PC-9 (cell line): ENCODE measurements at regions of chr15 and their contacts with region 1.

Region 1: DNA sequence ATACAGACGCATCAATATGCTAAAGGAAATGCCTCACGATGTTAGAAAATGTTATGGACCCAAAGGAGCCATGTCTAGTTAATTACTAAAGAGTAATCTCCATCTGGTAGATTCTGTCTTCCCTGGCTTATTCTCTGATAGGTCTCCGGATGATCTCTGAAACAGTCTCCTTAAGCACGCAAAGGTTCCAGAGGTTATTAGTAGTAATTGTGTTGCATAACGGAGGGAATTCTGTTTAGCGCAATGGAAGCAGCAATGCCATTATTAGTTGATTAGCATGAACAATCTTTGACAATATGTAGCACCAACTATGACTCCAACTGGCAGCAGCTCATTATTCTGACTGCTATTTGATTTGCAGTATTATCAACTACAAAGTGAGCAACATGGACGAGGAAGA is 952.5 kb upstream of the SEMA6D start:
- DNase-seq: no peak
- H3K4me3 ChIP-seq: no peak overlapping the region
- H3K27ac ChIP-seq: no peak overlapping the region
- H3K4me1 ChIP-seq: no peaks in the 10 kb centered on the region
- H3K27me3 ChIP-seq: no peaks in the 10 kb centered on the region
- CTCF ChIP-seq: no peak

Region 2: DNA sequence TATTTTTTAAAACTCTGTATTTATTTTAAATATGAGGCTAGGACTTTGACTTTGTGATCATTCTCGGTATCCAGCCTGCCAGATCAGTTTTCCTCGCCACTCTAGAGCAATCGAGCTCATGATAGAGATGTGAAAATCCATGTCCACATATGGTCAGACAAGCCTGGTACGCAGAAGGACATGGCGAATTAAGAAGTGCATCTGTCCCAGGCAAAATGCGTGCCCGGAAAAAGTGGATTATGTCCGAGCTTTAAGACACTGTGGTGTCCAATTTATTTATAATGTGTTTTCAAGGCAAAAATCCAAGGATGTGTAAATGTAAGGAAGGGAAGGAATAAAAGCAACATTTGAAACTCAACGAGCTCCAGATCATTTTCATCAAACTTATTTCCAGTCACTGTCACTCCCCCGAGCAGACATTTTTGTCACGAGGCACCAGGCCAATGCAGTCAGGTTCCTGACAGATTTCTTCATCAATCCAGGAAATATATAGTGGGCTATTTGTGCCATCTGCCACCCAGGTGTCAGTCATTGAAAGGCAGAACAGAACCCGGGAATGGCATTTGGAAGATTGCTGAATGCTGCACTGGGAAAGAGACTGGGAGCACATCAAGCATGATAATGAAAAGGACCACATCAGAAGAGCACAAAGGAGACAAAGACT is 304.3 kb before region 1 on chr15:
- CTCF ChIA-PET with region 1: no interaction called
- POLR2A ChIA-PET with region 1: interaction called, 10 read pairs
- intact Hi-C with region 1: no loop called
- DNase-seq: no peak
- H3K4me3 ChIP-seq: no peak overlapping the region
- H3K27ac ChIP-seq: no peak overlapping the region
- H3K4me1 ChIP-seq: no peaks in the 10 kb centered on the region
- H3K27me3 ChIP-seq: no peaks in the 10 kb centered on the region
- CTCF ChIP-seq: no peak